Mammary epithelial cell (primary cell): ENCODE measurements at regions of chr16 and their contacts with region 1.

Region 1: GRCh38 chr16:11667824-11668622 is at the start of gene SNN:
- DNase-seq: peak; percentile 79
- H3K4me3 ChIP-seq: peak within 1 kb of the TSS; percentile 65 to 90 (median 85)
- H3K27ac ChIP-seq: no peak within 1 kb of the TSS
- H3K4me1 ChIP-seq: peaks cover 49% of the 10 kb centered on the region
- H3K27me3 ChIP-seq: no peaks in the 10 kb centered on the region
- CTCF ChIP-seq: no peak
- total RNA-seq, gene SNN: 14.2 to 32.7 TPM

Region 2: GRCh38 chr16:11407047-11407982 is 260.7 kb before region 1 on chr16:
- CTCF ChIA-PET with region 1: no interaction called
- dilution Hi-C with region 1: no loop called
- in situ Hi-C with region 1: loop called in 1 of 2 experiments (anchors 25 kb)
- intact Hi-C with region 1: no loop called
- DNase-seq: peak; percentile 65
- H3K4me3 ChIP-seq: no peak overlapping the region
- H3K27ac ChIP-seq: no peak overlapping the region
- H3K4me1 ChIP-seq: no peaks in the 10 kb centered on the region
- H3K27me3 ChIP-seq: no peaks in the 10 kb centered on the region
- CTCF ChIP-seq: peak; percentile 76 to 77

Region 3: GRCh38 chr16:11446566-11447119 is 221.4 kb before region 1 on chr16:
- CTCF ChIA-PET with region 1: no interaction called
- dilution Hi-C with region 1: no loop called
- in situ Hi-C with region 1: no loop called
- intact Hi-C with region 1: no loop called
- DNase-seq: no peak
- H3K4me3 ChIP-seq: no peak overlapping the region
- H3K27ac ChIP-seq: no peak overlapping the region
- H3K4me1 ChIP-seq: no peaks in the 10 kb centered on the region
- H3K27me3 ChIP-seq: no peaks in the 10 kb centered on the region
- CTCF ChIP-seq: no peak

Region 4: DNA sequence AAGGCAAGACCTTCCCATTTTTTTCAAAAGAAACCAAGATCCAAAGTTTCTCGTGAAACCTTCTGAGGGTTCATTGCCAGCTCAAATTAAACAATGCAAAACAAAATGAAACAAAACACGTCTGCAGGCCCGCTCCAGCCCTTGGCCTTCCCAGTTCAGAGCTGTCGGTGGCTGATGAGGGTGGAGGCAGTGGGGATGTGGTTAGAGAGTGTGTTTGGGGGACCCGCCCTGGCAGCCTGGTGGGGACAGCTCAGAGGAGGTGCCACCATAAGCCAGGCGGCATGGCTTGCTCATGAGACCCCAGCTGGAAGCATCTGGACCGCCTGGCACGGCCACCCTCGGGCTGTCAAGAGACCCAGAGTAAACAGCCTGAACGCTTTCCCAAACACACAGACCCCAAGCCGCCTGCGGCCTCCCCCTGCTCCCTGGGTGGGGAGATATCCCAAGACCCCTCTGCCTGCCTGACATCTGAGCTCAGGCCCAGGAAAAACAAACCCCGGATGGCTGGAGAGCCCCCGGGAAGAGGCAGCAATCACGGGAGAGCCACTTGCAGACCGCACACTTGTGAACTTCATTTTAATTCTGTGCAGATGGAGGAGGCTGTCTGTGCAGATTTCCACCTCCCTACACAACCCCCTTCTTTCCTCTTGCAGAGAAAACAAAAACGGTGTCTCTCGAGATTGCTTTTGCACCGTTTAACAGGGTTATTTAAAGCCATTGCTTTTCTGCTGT is 45.9 kb before region 1 on chr16:
- CTCF ChIA-PET with region 1: no interaction called
- dilution Hi-C with region 1: loop called (anchors 5 kb)
- in situ Hi-C with region 1: no loop called
- intact Hi-C with region 1: no loop called
- DNase-seq: no peak
- H3K4me3 ChIP-seq: no peak overlapping the region
- H3K27ac ChIP-seq: no peak overlapping the region
- H3K4me1 ChIP-seq: peaks cover 7% of the 10 kb centered on the region
- H3K27me3 ChIP-seq: no peaks in the 10 kb centered on the region
- CTCF ChIP-seq: no peak

Region 5: DNA sequence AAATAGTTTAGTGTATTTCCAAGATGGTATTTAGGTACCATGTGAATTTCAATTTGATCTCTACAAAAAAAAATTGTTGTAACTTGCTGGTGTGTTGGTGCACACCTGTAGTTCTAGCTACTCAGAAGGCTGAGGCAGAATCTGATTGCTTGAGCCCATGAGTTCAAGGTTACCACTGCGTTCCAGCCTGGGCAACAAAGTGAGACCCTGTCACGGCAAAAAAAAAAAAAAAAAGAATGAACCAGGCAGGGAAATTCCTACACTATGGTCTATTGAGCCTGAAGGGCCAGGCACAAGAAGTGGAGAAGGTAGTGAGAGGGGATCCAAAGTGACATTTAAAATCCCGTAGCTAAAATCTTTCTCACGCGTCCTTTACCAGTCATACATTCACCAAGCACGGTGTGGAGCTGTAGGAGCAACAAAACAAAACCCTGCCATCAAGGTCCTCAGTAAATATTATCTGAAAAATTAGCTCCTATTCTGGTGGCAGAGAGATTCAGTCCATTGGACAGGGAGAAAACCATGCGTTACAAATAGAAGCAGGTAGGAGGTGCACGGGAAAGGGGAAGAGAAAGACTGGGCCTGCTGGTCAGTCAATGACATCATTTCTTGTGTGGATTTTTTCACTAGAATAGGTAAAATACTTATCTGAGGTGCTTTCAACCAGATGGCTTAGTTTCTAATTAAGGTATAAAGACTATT is 47.4 kb after region 1 on chr16:
- CTCF ChIA-PET with region 1: no interaction called
- dilution Hi-C with region 1: loop called (anchors 5 kb)
- in situ Hi-C with region 1: no loop called
- intact Hi-C with region 1: no loop called
- DNase-seq: no peak
- H3K4me3 ChIP-seq: no peak overlapping the region
- H3K27ac ChIP-seq: no peak overlapping the region
- H3K4me1 ChIP-seq: no peaks in the 10 kb centered on the region
- H3K27me3 ChIP-seq: no peaks in the 10 kb centered on the region
- CTCF ChIP-seq: no peak